Gastrocnemius medialis (tissue), 4 donors: ENCODE measurements at regions of chr18 and their contacts with region 1.

Region 1: GRCh38 chr18:57970356-57971080 is 73.5 kb upstream of the NEDD4L start:
- DNase-seq: no peak
- ATAC-seq: no peak
- H3K4me3 ChIP-seq: no peak overlapping the region
- H3K27ac ChIP-seq: no peak overlapping the region
- H3K4me1 ChIP-seq: peaks cover 0 to under 1% of the 10 kb centered on the region in 2 donors
- H3K27me3 ChIP-seq: no peaks in the 10 kb centered on the region
- CTCF ChIP-seq: no peak
- POLR2A ChIP-seq: no peak

Region 2: DNA sequence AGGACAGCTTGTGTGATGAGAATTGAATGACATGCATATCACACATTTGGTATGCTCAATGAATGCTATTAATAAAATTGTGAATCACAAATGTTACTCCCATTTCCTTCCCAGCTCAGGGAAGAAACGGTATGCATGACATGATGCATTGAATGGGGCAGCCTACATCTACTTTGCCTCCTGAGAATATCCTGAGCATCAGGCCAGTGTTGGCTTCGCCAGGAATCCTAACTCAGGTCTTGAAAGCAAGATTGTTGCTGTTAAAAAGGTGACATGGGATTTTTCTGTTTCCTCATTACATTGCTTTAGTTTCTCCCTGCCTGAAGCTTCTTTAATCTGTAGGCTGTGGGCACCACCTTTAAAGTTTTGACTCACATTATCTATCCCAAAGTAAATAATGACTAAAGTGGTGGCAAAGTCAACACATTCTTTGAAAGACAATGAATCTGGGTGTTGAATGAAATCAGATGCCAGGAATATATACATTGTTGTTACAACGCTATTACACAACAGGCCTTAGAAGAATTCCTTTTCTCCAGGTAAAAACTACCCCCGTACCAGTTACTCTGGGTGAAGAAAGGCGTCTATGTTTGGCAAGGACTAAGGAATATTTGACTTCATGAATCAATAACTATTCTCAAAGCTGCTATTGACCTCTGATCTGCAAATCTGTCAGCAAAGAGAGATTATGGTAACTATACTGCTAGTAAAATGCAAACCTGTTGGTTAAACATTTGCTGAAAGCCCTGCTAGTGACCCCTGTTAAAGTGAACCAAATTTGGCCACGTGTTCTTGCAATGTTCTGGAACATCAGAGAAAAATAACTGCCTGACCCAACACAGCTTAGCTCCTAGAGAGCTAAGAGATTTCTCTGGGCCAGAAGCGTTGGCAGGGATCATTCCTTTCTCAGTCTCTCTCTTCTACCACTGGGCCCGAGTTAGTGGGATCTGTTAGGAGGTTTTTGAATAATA is 43.0 kb after region 1 on chr18:
- in situ Hi-C with region 1: no loop called
- intact Hi-C with region 1: loop called (anchors 5 kb)
- DNase-seq: no peak
- ATAC-seq: no peak
- H3K4me3 ChIP-seq: no peak overlapping the region
- H3K27ac ChIP-seq: no peak overlapping the region
- H3K4me1 ChIP-seq: no peaks in the 10 kb centered on the region
- H3K27me3 ChIP-seq: no peaks in the 10 kb centered on the region
- CTCF ChIP-seq: no peak
- POLR2A ChIP-seq: no peak